ENCODE measurements at regions of chr12 and their contacts with region 1.

Region 1: DNA sequence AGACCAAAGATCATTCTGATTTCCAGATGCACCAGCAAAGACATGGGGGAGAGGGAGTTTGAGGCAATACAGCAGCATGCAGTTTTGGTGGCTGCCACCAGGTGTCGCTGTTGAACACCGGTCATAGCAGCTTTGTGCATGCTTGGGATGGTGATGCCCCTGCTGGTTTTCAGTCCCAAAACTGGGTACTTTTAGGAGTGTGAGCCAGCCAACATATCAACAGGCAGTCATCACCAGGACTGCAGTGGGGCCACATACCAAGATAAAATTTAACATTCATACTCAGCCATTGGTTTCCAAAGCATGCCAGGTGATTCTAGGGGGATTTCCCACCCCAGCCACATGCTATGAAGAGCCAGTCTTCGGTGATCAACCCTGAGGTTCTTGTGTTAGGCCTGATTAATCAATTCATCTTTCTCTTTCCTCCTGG is 64.2 kb downstream of the PHETA1 start:
- DNase-seq: no peak
- ATAC-seq: no peak

Region 2: GRCh38 chr12:110937104-110937641 is 367.5 kb before region 1 on chr12:
- intact Hi-C with region 1: loop called in 1 of 2 experiments (anchors 5 kb)
- DNase-seq: peak in 1 of 2 donors; percentile 45
- ATAC-seq: peak; percentile 53

Region 3: GRCh38 chr12:110966081-110966760 is 338.4 kb before region 1 on chr12:
- intact Hi-C with region 1: no loop called
- DNase-seq: no peak
- ATAC-seq: no peak

Region 4: GRCh38 chr12:111121840-111122239 is 182.8 kb before region 1 on chr12:
- intact Hi-C with region 1: no loop called
- DNase-seq: no peak
- ATAC-seq: no peak